Ascending aorta (tissue), 2 donors: ENCODE measurements at regions of chr2 and their contacts with region 1.

Region 1: GRCh38 chr2:171574149-171574795 is 52.0 kb downstream of the CYBRD1 start:
- DNase-seq: peak in 1 of 2 donors; percentile 88
- H3K4me3 ChIP-seq: peak overlapping the region in 1 of 2 donors; percentile 21
- H3K27ac ChIP-seq: no peak overlapping the region
- H3K4me1 ChIP-seq: no peaks in the 10 kb centered on the region
- H3K27me3 ChIP-seq: no peaks in the 10 kb centered on the region
- CTCF ChIP-seq: peak; percentile 78 to 99 (median 98)

Region 2: DNA sequence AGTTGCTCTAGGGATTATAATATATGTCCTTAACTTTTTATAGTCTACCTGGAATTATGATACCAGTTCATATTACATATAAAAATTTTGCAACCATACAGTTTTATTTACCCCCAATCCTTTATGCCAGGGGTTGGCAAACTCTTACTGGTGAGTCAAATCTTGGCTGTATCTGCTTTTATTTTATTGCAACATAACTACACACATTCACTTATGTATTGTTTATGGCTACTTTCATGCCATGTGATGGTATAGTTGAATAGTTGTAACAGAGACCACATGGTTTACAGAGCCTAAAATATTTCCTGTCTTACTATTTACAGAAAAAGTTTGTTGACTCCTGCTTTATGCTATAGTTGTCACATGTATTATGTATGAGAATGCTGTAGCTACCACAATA is 554.2 kb after region 1 on chr2:
- intact Hi-C with region 1: loop called (anchors 10 kb)
- DNase-seq: no peak
- H3K4me3 ChIP-seq: no peak overlapping the region
- H3K27ac ChIP-seq: no peak overlapping the region
- H3K4me1 ChIP-seq: no peaks in the 10 kb centered on the region
- H3K27me3 ChIP-seq: no peaks in the 10 kb centered on the region
- CTCF ChIP-seq: no peak